ENCODE measurements at regions of chr16 and their contacts with region 1.

Region 1: GRCh38 chr16:81623363-81624102 is 155.6 kb upstream of the PLCG2 start:
- DNase-seq: peak; percentile 60
- H3K4me3 ChIP-seq: no peak overlapping the region
- H3K27ac ChIP-seq: peak overlapping the region; percentile 51
- H3K4me1 ChIP-seq: peaks cover 55% of the 10 kb centered on the region
- H3K27me3 ChIP-seq: no peaks in the 10 kb centered on the region
- CTCF ChIP-seq: peak; percentile 59 to 65

Region 2: GRCh38 chr16:81261049-81261648 is 362.4 kb before region 1 on chr16:
- CTCF ChIA-PET with region 1: no interaction called
- dilution Hi-C with region 1: no loop called
- in situ Hi-C with region 1: no loop called
- intact Hi-C with region 1: loop called (anchors 10 kb)
- DNase-seq: no peak
- H3K4me3 ChIP-seq: no peak overlapping the region
- H3K27ac ChIP-seq: no peak overlapping the region
- H3K4me1 ChIP-seq: no peaks in the 10 kb centered on the region
- H3K27me3 ChIP-seq: no peaks in the 10 kb centered on the region
- CTCF ChIP-seq: peak; percentile 75 to 78

Region 3: GRCh38 chr16:81403616-81404373 is 219.7 kb before region 1 on chr16:
- CTCF ChIA-PET with region 1: no interaction called
- dilution Hi-C with region 1: no loop called
- in situ Hi-C with region 1: loop called in 1 of 2 experiments (anchors 10 kb)
- intact Hi-C with region 1: loop called (anchors 1 kb)
- DNase-seq: peak; percentile 69
- H3K4me3 ChIP-seq: peak overlapping the region in 1 of 3 experiments; percentile 36
- H3K27ac ChIP-seq: peak overlapping the region; percentile 45
- H3K4me1 ChIP-seq: peaks cover 40% of the 10 kb centered on the region
- H3K27me3 ChIP-seq: no peaks in the 10 kb centered on the region
- CTCF ChIP-seq: peak; percentile 66 to 93

Region 4: DNA sequence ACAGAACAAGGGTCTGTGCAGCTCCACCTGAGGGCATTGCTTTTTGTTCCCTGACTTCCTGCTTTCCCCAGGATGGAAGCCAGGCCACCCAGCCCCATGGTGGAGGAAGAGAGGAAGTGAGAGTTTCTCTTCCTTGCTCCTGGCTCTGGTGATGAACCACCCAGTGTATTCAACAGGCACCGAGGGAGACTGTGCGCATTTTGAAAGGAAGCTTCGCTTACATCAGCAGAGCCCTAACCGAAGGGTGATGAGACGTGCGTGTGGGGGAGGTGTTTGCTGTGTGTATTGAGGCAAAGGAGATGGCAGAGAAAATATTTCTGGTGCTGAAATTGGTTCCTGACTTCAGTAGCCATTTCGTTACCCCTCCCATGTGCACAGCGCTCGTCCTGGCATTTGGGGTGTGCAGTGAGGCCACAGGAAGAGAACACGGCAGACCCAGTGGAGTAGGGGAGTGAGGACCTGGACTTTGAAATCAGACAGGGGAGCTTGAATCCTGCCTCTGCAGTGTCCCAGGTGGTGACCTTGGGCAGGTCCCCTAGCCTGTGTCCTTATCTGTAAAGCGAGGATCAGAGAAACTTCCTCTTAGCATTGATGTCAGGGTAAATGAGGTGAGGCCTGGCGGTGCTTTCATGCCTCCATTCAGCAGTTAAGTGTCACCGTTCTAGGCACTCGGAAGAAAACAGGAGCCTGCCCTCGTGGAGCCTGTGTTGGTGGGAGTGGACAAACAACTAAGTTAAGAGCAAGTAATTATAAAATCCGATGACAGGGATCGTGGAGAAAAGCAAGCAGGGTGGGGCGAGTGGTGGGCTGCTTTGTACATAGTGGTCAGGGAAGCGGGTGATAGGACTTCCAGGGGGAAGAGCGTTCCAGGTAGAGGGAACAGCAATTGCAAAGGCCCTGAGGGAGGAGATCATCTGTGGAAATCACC is 171.5 kb before region 1 on chr16:
- CTCF ChIA-PET with region 1: no interaction called
- dilution Hi-C with region 1: loop called (anchors 5 kb)
- in situ Hi-C with region 1: no loop called
- intact Hi-C with region 1: loop called (anchors 2 kb)
- DNase-seq: no peak
- H3K4me3 ChIP-seq: no peak overlapping the region
- H3K27ac ChIP-seq: no peak overlapping the region
- H3K4me1 ChIP-seq: peaks cover 33% of the 10 kb centered on the region
- H3K27me3 ChIP-seq: no peaks in the 10 kb centered on the region
- CTCF ChIP-seq: no peak

Region 5: GRCh38 chr16:81537721-81538561 is 85.6 kb before region 1 on chr16:
- CTCF ChIA-PET with region 1: no interaction called
- dilution Hi-C with region 1: no loop called
- in situ Hi-C with region 1: no loop called
- intact Hi-C with region 1: no loop called
- DNase-seq: no peak
- H3K4me3 ChIP-seq: no peak overlapping the region
- H3K27ac ChIP-seq: no peak overlapping the region
- H3K4me1 ChIP-seq: peaks cover 22% of the 10 kb centered on the region
- H3K27me3 ChIP-seq: no peaks in the 10 kb centered on the region
- CTCF ChIP-seq: no peak

Region 6: GRCh38 chr16:81585785-81586184 is 37.7 kb before region 1 on chr16:
- CTCF ChIA-PET with region 1: no interaction called
- dilution Hi-C with region 1: loop called (anchors 5 kb)
- in situ Hi-C with region 1: no loop called
- intact Hi-C with region 1: loop called (anchors 1 kb)
- DNase-seq: no peak
- H3K4me3 ChIP-seq: no peak overlapping the region
- H3K27ac ChIP-seq: no peak overlapping the region
- H3K4me1 ChIP-seq: peaks cover 55% of the 10 kb centered on the region
- H3K27me3 ChIP-seq: no peaks in the 10 kb centered on the region
- CTCF ChIP-seq: peak; percentile 14 to 48

Region 7: GRCh38 chr16:81696961-81697615 is 73.6 kb after region 1 on chr16:
- CTCF ChIA-PET with region 1: no interaction called
- dilution Hi-C with region 1: loop called (anchors 10 kb)
- in situ Hi-C with region 1: no loop called
- intact Hi-C with region 1: loop called (anchors 1 kb)
- DNase-seq: peak; percentile 48
- H3K4me3 ChIP-seq: no peak overlapping the region
- H3K27ac ChIP-seq: no peak overlapping the region
- H3K4me1 ChIP-seq: peaks cover 40% of the 10 kb centered on the region
- H3K27me3 ChIP-seq: no peaks in the 10 kb centered on the region
- CTCF ChIP-seq: peak; percentile 76 to 80

Region 8: GRCh38 chr16:81723098-81723723 is 99.7 kb after region 1 on chr16:
- CTCF ChIA-PET with region 1: no interaction called
- dilution Hi-C with region 1: no loop called
- in situ Hi-C with region 1: no loop called
- intact Hi-C with region 1: loop called (anchors 1 kb)
- DNase-seq: peak; percentile 73
- H3K4me3 ChIP-seq: no peak overlapping the region
- H3K27ac ChIP-seq: no peak overlapping the region
- H3K4me1 ChIP-seq: peaks cover 8% of the 10 kb centered on the region
- H3K27me3 ChIP-seq: no peaks in the 10 kb centered on the region
- CTCF ChIP-seq: peak; percentile 50 to 66

Measured in mammary epithelial cell (primary cell).